ENCODE measurements at regions of chr6 and their contacts with region 1.

Region 1: DNA sequence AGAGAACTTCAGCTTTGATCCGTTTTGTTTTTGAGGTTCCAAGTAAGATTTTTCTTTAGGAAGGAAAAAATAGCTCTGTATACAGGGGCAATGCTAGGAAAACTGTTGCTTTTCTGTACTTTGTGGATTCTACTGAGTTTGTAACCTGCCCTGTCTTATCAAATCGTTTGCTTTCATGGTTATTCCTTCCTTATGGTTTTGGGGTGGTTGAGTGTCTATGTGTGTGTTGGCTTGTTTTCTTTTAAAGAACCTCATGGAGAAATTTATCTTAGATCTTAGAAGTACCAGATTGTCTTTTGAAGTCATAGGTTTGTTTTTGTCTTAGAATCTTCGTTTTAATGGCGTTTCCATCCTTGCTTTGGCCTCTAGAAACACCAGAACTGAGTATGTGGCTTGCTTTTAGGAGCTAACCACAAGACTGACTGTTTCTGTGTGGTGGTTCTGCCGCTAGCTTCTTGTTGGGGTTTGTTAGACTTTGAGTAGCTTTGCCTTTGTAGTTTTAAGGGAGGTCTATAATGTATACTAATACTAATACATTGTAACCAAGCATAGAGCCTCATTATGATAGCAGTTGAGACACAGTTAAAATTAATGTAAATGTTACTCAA is 86.8 kb downstream of the RPP40 start:
- DNase-seq: no peak
- H3K4me3 ChIP-seq: no peak overlapping the region
- H3K4me3 Mint-ChIP-seq: no peak overlapping the region
- H3K27ac ChIP-seq: no peak overlapping the region
- H3K27ac Mint-ChIP-seq: no peak overlapping the region
- H3K4me1 ChIP-seq: no peaks in the 10 kb centered on the region
- H3K4me1 Mint-ChIP-seq: peaks cover 2% of the 10 kb centered on the region
- H3K27me3 ChIP-seq: no peaks in the 10 kb centered on the region
- H3K27me3 Mint-ChIP-seq: peaks cover 0 to 3% (median 1%) of the 10 kb centered on the region in 3 donors
- CTCF ChIP-seq: no peak

Region 2: DNA sequence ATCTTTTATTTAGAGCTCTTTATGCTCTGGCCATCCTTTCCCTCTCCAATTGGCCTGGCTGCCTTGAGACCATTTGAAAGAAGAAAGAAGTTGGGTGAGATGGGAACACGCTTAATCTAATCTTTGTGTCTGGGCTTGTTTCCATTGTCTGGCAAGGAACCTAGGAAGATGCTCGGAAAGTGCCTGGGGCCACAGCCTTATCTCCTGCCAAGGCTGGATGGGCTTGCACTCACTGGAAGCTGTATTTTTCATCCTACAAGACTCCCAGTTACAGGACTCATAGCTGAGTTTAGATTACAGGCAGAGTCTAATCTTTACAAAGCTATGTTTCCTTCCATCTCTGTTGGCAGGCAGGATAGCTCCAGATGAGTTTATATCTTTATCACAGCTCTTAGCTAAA is 174.0 kb before region 1 on chr6:
- intact Hi-C with region 1: no loop called
- DNase-seq: no peak
- H3K4me3 ChIP-seq: no peak overlapping the region
- H3K4me3 Mint-ChIP-seq: no peak overlapping the region
- H3K27ac ChIP-seq: no peak overlapping the region
- H3K27ac Mint-ChIP-seq: no peak overlapping the region
- H3K4me1 ChIP-seq: no peaks in the 10 kb centered on the region
- H3K4me1 Mint-ChIP-seq: no peaks in the 10 kb centered on the region
- H3K27me3 ChIP-seq: no peaks in the 10 kb centered on the region
- H3K27me3 Mint-ChIP-seq: peaks cover 5 to 8% (median 6%) of the 10 kb centered on the region in 3 donors
- CTCF ChIP-seq: no peak

Region 3: DNA sequence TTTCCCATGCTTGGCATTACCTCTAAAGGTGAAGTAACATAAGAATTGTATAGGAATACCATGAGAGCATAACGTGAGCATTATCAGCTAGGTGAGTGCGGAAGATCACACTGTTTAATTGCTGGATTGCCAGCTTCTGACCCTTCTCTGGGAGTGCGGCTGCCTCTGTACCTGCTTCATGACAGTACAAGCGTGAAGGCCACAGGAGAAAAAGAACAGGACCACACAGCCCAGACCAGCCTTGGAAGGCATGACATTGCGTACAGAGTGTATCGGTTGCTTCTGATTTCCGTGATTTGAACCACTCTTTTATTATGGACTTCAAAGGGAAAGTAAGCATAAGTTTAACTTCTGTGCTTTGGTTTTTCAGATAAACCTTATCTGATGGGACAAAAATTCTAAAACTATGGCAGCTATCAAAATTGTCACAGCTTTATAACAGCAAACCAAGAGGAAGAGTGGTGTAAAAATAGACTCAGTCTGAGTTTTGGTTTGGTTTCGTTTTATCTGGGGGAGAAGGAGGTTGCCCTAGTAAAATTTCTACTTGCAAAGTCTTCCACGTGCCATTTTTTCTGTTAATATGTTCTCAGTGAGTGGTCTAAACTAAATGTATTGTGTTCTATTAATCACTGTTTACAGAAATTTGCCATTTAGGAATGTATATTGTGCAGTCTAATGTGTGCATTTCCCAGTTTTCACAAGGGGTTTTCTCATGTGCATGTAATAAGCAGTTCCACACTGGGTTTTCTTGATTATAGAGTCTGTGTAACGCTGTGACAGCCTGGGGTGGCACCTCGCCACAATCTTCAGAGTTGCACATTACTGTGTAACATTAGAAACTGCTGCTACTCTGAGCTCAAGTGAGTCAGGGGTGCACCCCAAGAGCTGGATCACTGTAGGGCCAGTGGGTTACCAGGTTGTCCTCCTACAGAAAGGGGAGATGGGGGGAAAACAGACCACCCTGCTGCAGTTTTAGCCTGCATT is 10.5 kb before region 1 on chr6:
- intact Hi-C with region 1: loop called in 1 of 2 experiments (anchors 1 kb)
- DNase-seq: peak in 1 of 3 donors; percentile 40
- H3K4me3 ChIP-seq: peak overlapping the region in 2 of 3 experiments; percentile 23 to 55
- H3K4me3 Mint-ChIP-seq: peak overlapping the region; percentile 63 to 82
- H3K27ac ChIP-seq: peak overlapping the region; percentile 45 to 79
- H3K27ac Mint-ChIP-seq: peak overlapping the region; percentile 71 to 87 (median 83)
- H3K4me1 ChIP-seq: peaks cover 34 to 41% of the 10 kb centered on the region in 2 donors
- H3K4me1 Mint-ChIP-seq: peaks cover 42% of the 10 kb centered on the region
- H3K27me3 ChIP-seq: no peaks in the 10 kb centered on the region
- H3K27me3 Mint-ChIP-seq: peaks cover 0 to 1% (median 0%) of the 10 kb centered on the region in 3 donors
- CTCF ChIP-seq: no peak

Measured in CD14-positive monocyte (primary cell).